ENCODE measurements at regions of chr11 and their contacts with region 1.

Region 1: DNA sequence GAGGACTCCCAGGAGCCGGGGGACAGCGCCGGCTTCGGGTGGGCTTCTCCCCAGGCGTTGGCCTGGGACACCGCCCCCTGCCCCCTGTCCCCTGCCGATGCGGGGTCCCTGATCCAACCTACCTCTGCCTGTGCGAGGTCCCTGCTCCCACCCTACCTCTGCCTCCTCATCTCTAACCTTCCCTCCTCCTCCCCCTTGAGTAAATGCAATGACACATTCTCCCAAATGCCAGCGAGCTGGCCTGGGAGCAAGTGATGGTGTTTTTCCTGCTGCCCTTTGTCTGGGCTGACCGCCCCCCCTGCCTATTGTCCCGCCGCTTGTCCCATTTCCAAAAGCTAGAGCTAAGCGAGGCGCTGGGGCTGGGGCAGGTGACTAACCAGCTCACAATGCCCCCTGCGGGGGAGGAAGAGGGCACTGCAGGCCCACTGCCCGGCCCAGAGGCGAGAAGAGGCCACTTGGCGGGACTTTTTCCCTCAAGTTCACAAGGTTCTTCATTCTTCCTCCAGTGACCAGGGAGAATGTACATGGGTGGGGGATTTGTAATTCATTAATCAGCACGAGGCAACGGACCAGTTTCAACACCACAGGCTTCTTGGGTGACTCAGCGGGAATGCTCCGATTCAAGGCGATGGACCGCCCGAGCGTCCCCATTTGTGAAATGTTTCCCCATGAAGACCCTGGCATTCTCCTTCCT is 674 bp upstream of the CLCF1 start:
- DNase-seq: peak; percentile 80
- ATAC-seq: peak; percentile 67
- H3K4me3 ChIP-seq: peak overlapping the region; percentile 65 to 69
- H3K27ac ChIP-seq: peak overlapping the region; percentile 98
- H3K4me1 ChIP-seq: peaks cover 73% of the 10 kb centered on the region
- H3K27me3 ChIP-seq: no peaks in the 10 kb centered on the region
- CTCF ChIP-seq: no peak; the same call in 1 of the 2 replicates

Region 2: DNA sequence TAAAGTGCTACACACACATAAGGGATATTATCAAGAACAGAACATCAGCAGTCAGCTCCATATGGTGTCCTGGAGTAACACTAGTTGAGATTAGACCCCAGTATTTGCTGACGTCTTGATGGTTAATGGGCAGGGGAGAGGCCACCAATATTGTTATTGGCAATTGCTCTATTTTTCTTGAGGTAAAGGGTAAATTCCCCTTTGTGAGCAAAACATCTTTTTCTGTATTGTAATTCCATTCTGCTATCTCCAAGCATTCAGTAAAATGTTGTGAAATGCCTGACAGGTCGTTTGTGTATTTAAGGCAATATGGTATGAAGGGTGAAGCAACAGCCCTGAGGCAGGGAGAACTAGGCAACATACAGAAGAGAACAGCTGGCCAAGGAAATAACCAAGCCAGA is 437.8 kb before region 1 on chr11:
- CTCF ChIA-PET with region 1: no interaction called
- POLR2A ChIA-PET with region 1: interaction called, 12 read pairs
- in situ Hi-C with region 1: no loop called
- intact Hi-C with region 1: no loop called
- DNase-seq: no peak
- ATAC-seq: no peak
- H3K4me3 ChIP-seq: no peak overlapping the region
- H3K27ac ChIP-seq: no peak overlapping the region
- H3K4me1 ChIP-seq: no peaks in the 10 kb centered on the region
- H3K27me3 ChIP-seq: no peaks in the 10 kb centered on the region
- CTCF ChIP-seq: no peak